Transverse colon (tissue), 4 donors: ENCODE measurements at regions of chr13 and their contacts with region 1.

Region 1: GRCh38 chr13:110138010-110138699 is 168.8 kb downstream of the COL4A1 start:
- DNase-seq: peak; percentile 49
- H3K4me3 ChIP-seq: peak overlapping the region; percentile 34 to 66 (median 51)
- H3K27ac ChIP-seq: peak overlapping the region in 3 of 4 donors; percentile 22 to 45 (median 40)
- H3K4me1 ChIP-seq: peaks cover 0 to 9% (median 0%) of the 10 kb centered on the region in 4 donors
- H3K27me3 ChIP-seq: no peaks in the 10 kb centered on the region
- CTCF ChIP-seq: peak in 1 of 5 experiments; percentile 1
- EP300 ChIP-seq: no peak
- POLR2A ChIP-seq: no peak

Region 2: GRCh38 chr13:108437496-108437895 is 1700.7 kb before region 1 on chr13:
- in situ Hi-C with region 1: no loop called
- intact Hi-C with region 1: no loop called
- DNase-seq: no peak
- H3K4me3 ChIP-seq: no peak overlapping the region
- H3K27ac ChIP-seq: no peak overlapping the region
- H3K4me1 ChIP-seq: no peaks in the 10 kb centered on the region
- H3K27me3 ChIP-seq: no peaks in the 10 kb centered on the region
- CTCF ChIP-seq: no peak
- EP300 ChIP-seq: no peak
- POLR2A ChIP-seq: no peak

Region 3: GRCh38 chr13:108961542-108962125 is 1176.5 kb before region 1 on chr13:
- in situ Hi-C with region 1: no loop called
- intact Hi-C with region 1: loop called (anchors 10 kb)
- DNase-seq: no peak
- H3K4me3 ChIP-seq: no peak overlapping the region
- H3K27ac ChIP-seq: no peak overlapping the region
- H3K4me1 ChIP-seq: no peaks in the 10 kb centered on the region
- H3K27me3 ChIP-seq: no peaks in the 10 kb centered on the region
- CTCF ChIP-seq: peak; percentile 76 to 87 (median 84)
- EP300 ChIP-seq: no peak
- POLR2A ChIP-seq: no peak

Region 4: GRCh38 chr13:109243311-109243951 is 894.7 kb before region 1 on chr13:
- in situ Hi-C with region 1: no loop called
- intact Hi-C with region 1: no loop called
- DNase-seq: no peak
- H3K4me3 ChIP-seq: no peak overlapping the region
- H3K27ac ChIP-seq: peak overlapping the region in 2 of 4 donors; percentile 30 to 47
- H3K4me1 ChIP-seq: no peaks in the 10 kb centered on the region
- H3K27me3 ChIP-seq: no peaks in the 10 kb centered on the region
- CTCF ChIP-seq: no peak
- EP300 ChIP-seq: no peak
- POLR2A ChIP-seq: no peak

Region 5: GRCh38 chr13:109989155-109989554 is 149.0 kb before region 1 on chr13:
- in situ Hi-C with region 1: no loop called
- intact Hi-C with region 1: no loop called
- DNase-seq: no peak
- H3K4me3 ChIP-seq: no peak overlapping the region
- H3K27ac ChIP-seq: no peak overlapping the region
- H3K4me1 ChIP-seq: no peaks in the 10 kb centered on the region
- H3K27me3 ChIP-seq: no peaks in the 10 kb centered on the region
- CTCF ChIP-seq: no peak
- EP300 ChIP-seq: no peak
- POLR2A ChIP-seq: no peak

Region 6: DNA sequence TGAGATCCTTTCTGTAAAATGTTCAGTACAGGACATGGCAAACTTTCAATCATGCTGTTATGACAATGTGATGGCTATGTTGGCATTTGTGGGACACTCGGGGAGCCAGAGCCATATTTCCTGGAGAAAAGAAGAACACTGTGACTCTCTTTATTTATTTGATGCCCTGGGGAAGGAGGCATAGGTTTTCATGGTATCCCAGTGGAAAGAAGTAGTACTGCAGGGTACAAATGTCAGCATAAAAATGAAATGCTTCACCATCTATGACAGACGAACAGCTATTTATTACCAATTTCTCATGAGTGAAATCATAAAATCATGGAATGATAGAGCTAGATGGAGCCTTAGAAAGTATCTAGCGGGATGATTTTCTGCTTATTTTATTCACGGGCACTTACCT is 48.3 kb before region 1 on chr13:
- in situ Hi-C with region 1: no loop called
- intact Hi-C with region 1: loop called (anchors 1 kb)
- DNase-seq: no peak
- H3K4me3 ChIP-seq: no peak overlapping the region
- H3K27ac ChIP-seq: no peak overlapping the region
- H3K4me1 ChIP-seq: peaks cover under 1 to 8% (median 4%) of the 10 kb centered on the region in 4 donors
- H3K27me3 ChIP-seq: no peaks in the 10 kb centered on the region
- CTCF ChIP-seq: peak in 3 of 5 experiments; percentile 14 to 25 (median 17)
- EP300 ChIP-seq: no peak
- POLR2A ChIP-seq: no peak